HepG2 (cell line): ENCODE measurements at regions of chr11 and their contacts with region 1.

Region 1: GRCh38 chr11:61581030-61581928 is at the start of gene SYT7:
- DNase-seq: peak; percentile 87
- ATAC-seq: peak; percentile 60
- H3K4me3 ChIP-seq: peak within 1 kb of the TSS; percentile 43 to 75 (median 52)
- H3K27ac ChIP-seq: no peak within 1 kb of the TSS
- H3K4me1 ChIP-seq: peaks cover 45% of the 10 kb centered on the region
- H3K27me3 ChIP-seq: peaks cover 5 to 43% of the 10 kb centered on the region in 2 experiments; a peak in 3 of 5 replicates
- CTCF ChIP-seq: peak; percentile 53
- EP300 ChIP-seq: no peak
- POLR2A ChIP-seq: no peak
- RAD21 ChIP-seq: peak; percentile 57
- total RNA-seq, gene SYT7: 0.81 and 1.4 TPM in 2 replicates

Region 2: GRCh38 chr11:61609980-61610366 is 28.7 kb after region 1 on chr11:
- CTCF ChIA-PET with region 1: no interaction called
- POLR2A ChIA-PET with region 1: no interaction called
- in situ Hi-C with region 1: no loop called
- intact Hi-C with region 1: loop called (anchors 2 kb)
- DNase-seq: no peak
- ATAC-seq: peak; percentile 70
- H3K4me3 ChIP-seq: peak overlapping the region in 1 of 3 experiments; percentile 53; a peak in 2 of 6 replicates
- H3K27ac ChIP-seq: no peak overlapping the region
- H3K4me1 ChIP-seq: peaks cover 62% of the 10 kb centered on the region
- H3K27me3 ChIP-seq: peaks cover 2 to 21% of the 10 kb centered on the region in 2 experiments
- CTCF ChIP-seq: peak; percentile 61
- EP300 ChIP-seq: no peak
- POLR2A ChIP-seq: no peak
- RAD21 ChIP-seq: no peak